Right ventricle myocardium inferior (tissue), 1 donor: ENCODE measurements at regions of chr2 and their contacts with region 1.

Region 1: DNA sequence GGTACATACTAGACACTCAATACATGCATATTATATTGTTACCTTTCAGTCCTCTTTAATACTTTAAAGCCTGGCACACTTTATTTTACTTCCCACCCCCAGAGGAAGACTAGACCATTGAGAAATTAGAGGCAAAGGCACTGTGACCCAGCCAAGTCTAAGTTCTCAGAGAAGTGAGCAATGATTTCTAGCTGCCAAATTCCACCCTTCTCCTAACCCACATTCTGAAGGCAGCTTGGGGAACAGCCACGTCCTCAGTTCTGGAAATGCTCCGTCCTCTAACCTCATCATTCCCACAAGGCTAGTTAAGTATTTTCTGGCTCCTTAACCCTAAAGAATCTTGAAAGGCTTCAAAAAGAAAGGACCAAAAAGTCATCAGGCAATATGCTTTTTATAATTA is 86.6 kb downstream of the COL5A2 start:
- DNase-seq: no peak
- ATAC-seq: peak; percentile 93

Region 2: GRCh38 chr2:189142893-189143759 is 50.2 kb after region 1 on chr2:
- intact Hi-C with region 1: no loop called
- DNase-seq: no peak
- ATAC-seq: no peak

Region 3: GRCh38 chr2:189171956-189172609 is 79.1 kb after region 1 on chr2:
- intact Hi-C with region 1: no loop called
- DNase-seq: no peak
- ATAC-seq: no peak

Region 4: GRCh38 chr2:189254268-189254883 is 161.4 kb after region 1 on chr2:
- intact Hi-C with region 1: no loop called
- DNase-seq: peak; percentile 71
- ATAC-seq: peak; percentile 66

Region 5: DNA sequence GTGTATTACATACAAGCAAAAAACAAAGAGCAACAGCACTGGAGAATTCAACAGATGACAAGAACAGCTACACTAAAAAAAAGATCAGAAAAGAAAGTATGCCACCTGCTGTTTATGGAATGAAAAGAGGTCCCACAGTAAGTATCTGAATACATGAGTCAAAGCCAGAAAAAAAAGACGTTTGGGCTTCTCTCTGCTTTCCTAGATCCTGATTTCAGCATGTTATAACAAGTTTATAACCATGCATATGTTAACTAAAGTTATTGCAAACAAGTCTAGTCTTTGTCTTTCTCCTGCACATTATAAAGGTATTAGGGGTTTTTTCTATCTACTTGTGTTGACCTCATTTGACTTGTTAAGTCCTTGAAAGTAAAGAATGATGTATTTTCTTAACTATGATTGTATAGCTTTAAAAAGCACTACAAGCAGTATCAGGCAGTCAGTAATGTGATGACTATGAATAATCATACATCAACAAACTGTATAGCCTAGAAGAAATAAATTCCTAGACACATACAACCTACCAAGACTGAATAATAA is 195.1 kb after region 1 on chr2:
- intact Hi-C with region 1: loop called (anchors 2 kb)
- DNase-seq: no peak
- ATAC-seq: peak; percentile 64

Region 6: DNA sequence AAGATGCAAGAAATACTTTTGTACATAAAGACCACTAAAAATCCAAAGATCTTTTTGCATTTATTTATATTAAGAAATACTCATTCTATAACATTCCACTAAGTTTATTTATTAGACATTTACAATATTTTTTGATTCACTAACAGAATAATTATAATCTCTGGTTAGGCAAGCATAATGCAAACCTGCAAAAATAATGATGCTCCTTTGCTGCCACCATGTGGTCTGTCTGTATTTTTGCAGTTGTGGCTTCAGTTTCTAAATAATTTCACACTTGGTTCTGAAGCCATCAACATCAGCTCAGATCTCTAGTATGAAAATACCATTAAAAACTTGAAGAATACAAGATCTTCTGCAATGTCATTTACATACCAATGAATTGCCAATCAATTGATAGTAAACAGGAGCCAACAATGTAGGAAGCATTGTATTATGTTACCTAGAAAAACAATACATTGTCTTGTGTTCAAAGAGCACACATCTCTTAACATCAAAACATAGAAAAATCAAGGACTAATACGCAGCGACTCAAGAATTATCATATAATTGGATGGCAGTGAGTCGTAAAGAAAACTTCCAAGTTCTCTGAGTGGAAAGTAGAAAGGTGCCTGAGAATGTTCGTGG is 319.5 kb after region 1 on chr2:
- intact Hi-C with region 1: loop called (anchors 5 kb)
- DNase-seq: no peak
- ATAC-seq: peak; percentile 64